ENCODE measurements at regions of chr11 and their contacts with region 1.

Region 1: GRCh38 chr11:95067039-95067840 is 521 bp downstream of the SRSF8 start:
- DNase-seq: peak; percentile 72
- ATAC-seq: peak; percentile 90
- H3K4me3 ChIP-seq: peak overlapping the region; percentile 91
- H3K27ac ChIP-seq: peak overlapping the region; percentile 85
- H3K4me1 ChIP-seq: no peaks in the 10 kb centered on the region
- H3K27me3 ChIP-seq: no peaks in the 10 kb centered on the region
- CTCF ChIP-seq: peak; percentile 65
- POLR2A ChIP-seq: peak; percentile 57
- RAD21 ChIP-seq: peak; percentile 24; the same call in 1 of the 2 replicates

Region 2: GRCh38 chr11:94845622-94846021 is 221.6 kb before region 1 on chr11:
- CTCF ChIA-PET with region 1: no interaction called
- POLR2A ChIA-PET with region 1: no interaction called
- dilution Hi-C with region 1: no loop called
- in situ Hi-C with region 1: no loop called
- intact Hi-C with region 1: no loop called
- DNase-seq: peak; percentile 89
- ATAC-seq: peak; percentile 94
- H3K4me3 ChIP-seq: no peak overlapping the region
- H3K27ac ChIP-seq: peak overlapping the region; percentile 97; the same call in 1 of the 2 replicates
- H3K4me1 ChIP-seq: peaks cover 12% of the 10 kb centered on the region
- H3K27me3 ChIP-seq: no peaks in the 10 kb centered on the region
- CTCF ChIP-seq: no peak
- POLR2A ChIP-seq: no peak
- RAD21 ChIP-seq: no peak

Region 3: GRCh38 chr11:95055283-95055897 is 11.8 kb before region 1 on chr11:
- CTCF ChIA-PET with region 1: interaction called, 16 read pairs
- POLR2A ChIA-PET with region 1: no interaction called
- dilution Hi-C with region 1: no loop called
- in situ Hi-C with region 1: no loop called
- intact Hi-C with region 1: no loop called
- DNase-seq: no peak
- ATAC-seq: no peak
- H3K4me3 ChIP-seq: no peak overlapping the region
- H3K27ac ChIP-seq: no peak overlapping the region
- H3K4me1 ChIP-seq: no peaks in the 10 kb centered on the region
- H3K27me3 ChIP-seq: peaks cover 16% of the 10 kb centered on the region
- CTCF ChIP-seq: no peak
- POLR2A ChIP-seq: no peak
- RAD21 ChIP-seq: no peak

Region 4: GRCh38 chr11:95485115-95485900 is 418.1 kb after region 1 on chr11:
- CTCF ChIA-PET with region 1: no interaction called
- POLR2A ChIA-PET with region 1: no interaction called
- dilution Hi-C with region 1: no loop called
- in situ Hi-C with region 1: no loop called
- intact Hi-C with region 1: no loop called
- DNase-seq: no peak
- ATAC-seq: no peak
- H3K4me3 ChIP-seq: no peak overlapping the region
- H3K27ac ChIP-seq: no peak overlapping the region
- H3K4me1 ChIP-seq: no peaks in the 10 kb centered on the region
- H3K27me3 ChIP-seq: no peaks in the 10 kb centered on the region
- CTCF ChIP-seq: no peak
- POLR2A ChIP-seq: no peak
- RAD21 ChIP-seq: no peak